ENCODE measurements at regions of chr2 and their contacts with region 1.

Region 1: DNA sequence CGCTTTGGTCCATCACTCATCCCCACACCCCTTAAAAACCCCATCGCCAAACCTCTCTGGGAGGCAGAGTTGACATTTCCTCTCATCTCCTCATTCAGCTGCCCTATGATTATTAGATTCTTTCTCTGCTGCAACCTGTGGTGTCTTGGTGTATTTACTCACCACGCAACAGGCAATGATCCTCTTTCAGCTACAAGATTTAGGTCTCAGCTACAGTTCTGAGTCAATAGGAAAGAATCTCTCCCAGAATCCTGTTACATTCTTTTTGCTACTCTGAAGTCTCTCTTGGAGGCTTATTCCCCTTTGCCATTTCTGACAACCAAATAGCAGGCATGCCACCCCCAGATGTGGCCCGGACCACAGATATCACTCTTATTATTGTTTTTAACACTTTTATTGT is 468.3 kb upstream of the GYPC start:
- DNase-seq: no peak
- H3K4me3 ChIP-seq: no peak overlapping the region
- H3K27ac ChIP-seq: no peak overlapping the region
- H3K4me1 ChIP-seq: no peaks in the 10 kb centered on the region
- H3K27me3 ChIP-seq: no peaks in the 10 kb centered on the region
- CTCF ChIP-seq: no peak
- POLR2A ChIP-seq: no peak

Region 2: GRCh38 chr2:125861461-125861860 is 326.2 kb before region 1 on chr2:
- intact Hi-C with region 1: loop called (anchors 5 kb)
- DNase-seq: no peak
- H3K4me3 ChIP-seq: no peak overlapping the region
- H3K27ac ChIP-seq: no peak overlapping the region
- H3K4me1 ChIP-seq: no peaks in the 10 kb centered on the region
- H3K27me3 ChIP-seq: no peaks in the 10 kb centered on the region
- CTCF ChIP-seq: no peak
- POLR2A ChIP-seq: no peak

Region 3: DNA sequence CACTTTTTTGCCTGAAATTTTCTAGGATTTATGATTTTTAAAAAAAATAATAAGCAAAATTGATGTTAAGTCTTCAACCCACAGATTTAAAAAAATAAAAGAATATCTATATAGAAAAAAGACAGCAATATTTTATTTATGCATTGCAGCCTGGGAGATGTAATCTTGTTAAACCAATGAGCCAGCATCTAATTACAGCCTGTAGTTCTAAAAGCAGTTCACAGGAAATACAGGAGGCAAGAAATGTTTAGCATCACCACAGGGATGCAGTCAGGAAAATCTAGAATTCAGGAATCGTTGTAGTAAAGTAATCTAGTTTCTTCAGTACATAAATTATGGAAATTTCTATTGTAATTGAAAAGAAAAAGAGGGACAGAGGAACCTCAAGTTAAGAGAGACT is 1920.5 kb after region 1 on chr2:
- intact Hi-C with region 1: no loop called
- DNase-seq: no peak
- H3K4me3 ChIP-seq: no peak overlapping the region
- H3K27ac ChIP-seq: no peak overlapping the region
- H3K4me1 ChIP-seq: no peaks in the 10 kb centered on the region
- H3K27me3 ChIP-seq: no peaks in the 10 kb centered on the region
- CTCF ChIP-seq: no peak
- POLR2A ChIP-seq: no peak